ENCODE measurements at regions of chr19 and their contacts with region 1.

Region 1: GRCh38 chr19:36528194-36528920 is at the start of gene ZNF260:
- DNase-seq: peak; percentile 89
- H3K4me3 Mint-ChIP-seq: peak within 1 kb of the TSS; percentile 95
- H3K27ac Mint-ChIP-seq: peak within 1 kb of the TSS; percentile 93
- H3K4me1 Mint-ChIP-seq: peaks cover 22% of the 10 kb centered on the region
- H3K27me3 Mint-ChIP-seq: peaks cover 1% of the 10 kb centered on the region
- total RNA-seq, gene ZNF260: 7.5 and 8.9 TPM in 2 replicates

Region 2: GRCh38 chr19:36009220-36009619 is 519.1 kb before region 1 on chr19:
- intact Hi-C with region 1: no loop called
- DNase-seq: peak; percentile 51
- H3K4me3 Mint-ChIP-seq: peak overlapping the region; percentile 61
- H3K27ac Mint-ChIP-seq: no peak overlapping the region
- H3K4me1 Mint-ChIP-seq: peaks cover 30% of the 10 kb centered on the region
- H3K27me3 Mint-ChIP-seq: no peaks in the 10 kb centered on the region

Region 3: DNA sequence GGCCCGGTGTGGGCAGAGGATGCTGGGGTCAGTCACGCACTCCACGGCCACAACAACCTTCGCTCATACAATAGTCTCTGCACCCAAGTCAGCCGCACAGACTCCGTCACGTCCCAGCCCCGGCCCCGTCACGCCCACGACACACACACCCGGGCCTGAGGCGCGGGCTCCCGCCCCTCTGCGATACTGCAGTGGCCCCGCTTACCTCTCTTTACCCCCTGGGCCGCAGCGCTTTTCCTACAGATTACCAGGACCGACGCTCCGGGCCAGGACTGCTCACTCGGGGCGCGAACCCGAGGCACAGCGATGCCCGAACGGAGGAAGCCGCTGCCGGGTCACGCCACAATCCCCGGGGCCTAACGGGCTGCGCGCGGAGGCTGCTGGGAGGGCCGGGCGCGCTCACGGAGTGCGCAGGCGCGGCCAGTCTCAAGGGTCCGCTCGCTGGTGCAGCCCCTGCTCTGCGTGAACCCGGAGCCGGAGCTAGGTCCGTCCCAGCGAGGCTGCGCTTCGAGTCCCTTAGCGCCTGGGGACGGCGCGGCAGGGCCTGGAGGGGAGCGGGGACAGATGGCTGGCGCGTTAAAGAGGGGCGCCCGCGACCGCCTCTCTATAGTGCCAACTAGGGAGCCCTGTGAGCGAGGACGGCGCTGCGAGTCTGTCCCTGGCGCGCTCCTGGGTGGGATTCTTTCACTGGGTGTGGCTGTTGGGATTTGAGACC is 109.9 kb before region 1 on chr19 and contains the start of gene ZFP82:
- intact Hi-C with region 1: loop called (anchors 2 kb)
- DNase-seq: peak; percentile 73
- H3K4me3 Mint-ChIP-seq: peak within 1 kb of the TSS; percentile 93
- H3K27ac Mint-ChIP-seq: peak within 1 kb of the TSS; percentile 94
- H3K4me1 Mint-ChIP-seq: peaks cover 18% of the 10 kb centered on the region
- H3K27me3 Mint-ChIP-seq: peaks cover 5% of the 10 kb centered on the region
- total RNA-seq, gene ZFP82: 5.1 and 5.3 TPM in 2 replicates

Region 4: GRCh38 chr19:36605101-36605876 is 76.9 kb after region 1 on chr19 and contains the start of gene ZNF382:
- intact Hi-C with region 1: loop called (anchors 1 kb)
- DNase-seq: peak; percentile 85
- H3K4me3 Mint-ChIP-seq: peak within 1 kb of the TSS; percentile 90
- H3K27ac Mint-ChIP-seq: peak within 1 kb of the TSS; percentile 95
- H3K4me1 Mint-ChIP-seq: peaks cover 26% of the 10 kb centered on the region
- H3K27me3 Mint-ChIP-seq: no peaks in the 10 kb centered on the region
- total RNA-seq, gene ZNF382: 10.2 and 10.8 TPM in 2 replicates

Region 5: GRCh38 chr19:36687214-36688056 is 159.1 kb after region 1 on chr19 and contains the start of gene ZNF567:
- intact Hi-C with region 1: loop called (anchors 1 kb)
- DNase-seq: peak; percentile 97
- H3K4me3 Mint-ChIP-seq: peak within 1 kb of the TSS; percentile 95
- H3K27ac Mint-ChIP-seq: peak within 1 kb of the TSS; percentile 91
- H3K4me1 Mint-ChIP-seq: peaks cover 24% of the 10 kb centered on the region
- H3K27me3 Mint-ChIP-seq: peaks cover 2% of the 10 kb centered on the region
- total RNA-seq, gene ZNF567: 5.8 and 8.5 TPM in 2 replicates

Region 6: DNA sequence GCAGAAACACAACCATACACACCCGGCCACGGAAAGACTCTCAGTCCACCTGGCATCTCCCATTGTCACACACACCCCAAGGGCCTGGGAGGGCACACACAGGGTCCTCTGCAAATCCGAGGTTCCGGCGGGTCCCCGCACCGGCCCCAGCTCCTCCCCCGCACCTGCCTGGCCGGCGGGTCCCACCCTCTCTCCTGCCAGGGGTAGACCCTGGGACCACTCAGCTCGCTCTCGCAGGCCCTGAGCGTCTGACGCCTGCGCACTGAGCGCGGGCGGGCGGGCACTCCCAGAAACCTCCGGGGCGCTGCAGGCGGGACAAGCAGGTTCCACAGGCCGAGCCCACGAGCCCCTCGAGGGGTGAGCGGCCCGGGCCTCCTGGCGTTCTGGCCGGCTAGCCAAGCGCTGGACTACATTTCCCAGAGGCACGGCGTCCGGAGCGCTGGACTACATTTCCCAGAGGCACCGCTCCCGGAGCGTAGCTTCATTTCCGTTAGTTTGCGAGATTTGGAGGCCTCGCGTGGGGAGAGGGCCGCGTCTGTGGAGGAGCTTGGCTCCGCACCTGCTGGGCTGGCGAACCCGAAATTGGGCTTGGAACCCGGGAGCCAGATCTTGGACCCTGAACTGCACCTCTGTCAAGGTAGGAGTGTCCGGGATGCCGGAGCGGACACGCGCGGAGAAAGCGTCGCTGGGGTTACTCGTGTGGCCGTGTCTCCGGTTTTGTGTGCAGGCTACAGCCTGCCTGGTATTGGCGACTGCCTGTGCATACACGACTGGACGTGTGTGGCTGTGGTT is 549.8 kb after region 1 on chr19 and contains the start of gene ZNF420:
- intact Hi-C with region 1: loop called (anchors 1 kb)
- DNase-seq: peak; percentile 85
- H3K4me3 Mint-ChIP-seq: peak within 1 kb of the TSS; percentile 93
- H3K27ac Mint-ChIP-seq: peak within 1 kb of the TSS; percentile 90
- H3K4me1 Mint-ChIP-seq: peaks cover 21% of the 10 kb centered on the region
- H3K27me3 Mint-ChIP-seq: no peaks in the 10 kb centered on the region
- total RNA-seq, gene ZNF420: 5.9 and 9.1 TPM in 2 replicates

Region 7: GRCh38 chr19:37217855-37218591 is 689.7 kb after region 1 on chr19 and contains the start of gene ZNF383:
- intact Hi-C with region 1: loop called (anchors 1 kb)
- DNase-seq: peak; percentile 78
- H3K4me3 Mint-ChIP-seq: peak within 1 kb of the TSS; percentile 96
- H3K27ac Mint-ChIP-seq: peak within 1 kb of the TSS; percentile 90
- H3K4me1 Mint-ChIP-seq: peaks cover 20% of the 10 kb centered on the region
- H3K27me3 Mint-ChIP-seq: no peaks in the 10 kb centered on the region
- total RNA-seq, gene ZNF383: 6.3 TPM in 2 replicates